Astrocyte of the cerebellum (primary cell): ENCODE measurements at regions of chr1 and their contacts with region 1.

Region 1: DNA sequence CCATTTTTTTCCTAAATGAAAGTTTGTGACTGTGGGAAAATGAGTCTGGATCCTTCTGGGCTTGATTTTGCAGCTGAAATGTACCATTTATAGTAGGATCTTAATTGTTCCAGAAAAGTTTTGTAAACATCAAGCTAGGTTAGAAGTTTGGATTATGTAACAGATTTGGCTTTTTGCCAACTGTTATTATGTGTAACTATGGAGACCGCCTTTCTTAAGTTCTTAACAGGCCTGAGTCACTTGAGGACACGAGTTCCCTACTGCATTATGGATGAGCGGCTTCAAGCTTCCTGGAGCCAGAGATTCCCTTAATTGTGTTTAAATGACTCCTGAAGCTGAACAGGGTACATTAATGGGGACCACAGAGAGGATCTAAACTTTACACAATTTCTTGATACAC is 22.2 kb downstream of the SLC25A33 start:
- DNase-seq: peak; percentile 96
- H3K4me3 ChIP-seq: no peak overlapping the region
- CTCF ChIP-seq: no peak

Region 2: GRCh38 chr1:9249534-9250410 is 311.7 kb before region 1 on chr1:
- in situ Hi-C with region 1: loop called (anchors 25 kb)
- DNase-seq: no peak
- H3K4me3 ChIP-seq: no peak overlapping the region
- CTCF ChIP-seq: peak; percentile 60

Region 3: GRCh38 chr1:9371391-9371935 is 190.0 kb before region 1 on chr1:
- in situ Hi-C with region 1: loop called (anchors 10 kb)
- DNase-seq: peak; percentile 76
- H3K4me3 ChIP-seq: no peak overlapping the region
- CTCF ChIP-seq: no peak

Region 4: GRCh38 chr1:9438431-9439073 is 122.9 kb before region 1 on chr1:
- in situ Hi-C with region 1: no loop called
- DNase-seq: peak; percentile 52
- H3K4me3 ChIP-seq: no peak overlapping the region
- CTCF ChIP-seq: no peak